ENCODE measurements at regions of chr7 and their contacts with region 1.

Region 1: DNA sequence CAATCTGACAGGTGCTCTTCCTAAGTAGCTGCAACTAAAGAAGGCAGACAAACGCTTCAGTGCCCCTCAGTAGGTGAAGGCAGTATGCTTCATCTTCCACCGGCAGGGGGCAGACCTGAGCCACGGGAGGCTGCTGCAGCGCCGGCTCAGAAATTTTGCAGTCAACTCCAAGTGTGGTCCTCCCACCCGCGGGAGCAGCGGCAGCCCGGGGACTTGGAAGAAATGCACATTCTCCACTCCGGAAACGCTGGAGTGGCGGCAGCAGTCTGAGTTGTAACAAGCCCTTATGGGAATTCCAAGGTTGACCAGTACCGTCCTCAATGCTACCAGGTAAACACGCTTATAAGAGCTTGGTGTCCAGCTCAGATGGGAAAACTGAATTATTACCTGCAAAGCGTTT is 3.4 kb downstream of the IGFBP3 start:
- DNase-seq: peak; percentile 81
- H3K4me3 ChIP-seq: no peak overlapping the region
- H3K27ac ChIP-seq: no peak overlapping the region
- H3K4me1 ChIP-seq: no peaks in the 10 kb centered on the region
- H3K27me3 ChIP-seq: peaks cover 36% of the 10 kb centered on the region
- CTCF ChIP-seq: peak; percentile 88

Region 2: DNA sequence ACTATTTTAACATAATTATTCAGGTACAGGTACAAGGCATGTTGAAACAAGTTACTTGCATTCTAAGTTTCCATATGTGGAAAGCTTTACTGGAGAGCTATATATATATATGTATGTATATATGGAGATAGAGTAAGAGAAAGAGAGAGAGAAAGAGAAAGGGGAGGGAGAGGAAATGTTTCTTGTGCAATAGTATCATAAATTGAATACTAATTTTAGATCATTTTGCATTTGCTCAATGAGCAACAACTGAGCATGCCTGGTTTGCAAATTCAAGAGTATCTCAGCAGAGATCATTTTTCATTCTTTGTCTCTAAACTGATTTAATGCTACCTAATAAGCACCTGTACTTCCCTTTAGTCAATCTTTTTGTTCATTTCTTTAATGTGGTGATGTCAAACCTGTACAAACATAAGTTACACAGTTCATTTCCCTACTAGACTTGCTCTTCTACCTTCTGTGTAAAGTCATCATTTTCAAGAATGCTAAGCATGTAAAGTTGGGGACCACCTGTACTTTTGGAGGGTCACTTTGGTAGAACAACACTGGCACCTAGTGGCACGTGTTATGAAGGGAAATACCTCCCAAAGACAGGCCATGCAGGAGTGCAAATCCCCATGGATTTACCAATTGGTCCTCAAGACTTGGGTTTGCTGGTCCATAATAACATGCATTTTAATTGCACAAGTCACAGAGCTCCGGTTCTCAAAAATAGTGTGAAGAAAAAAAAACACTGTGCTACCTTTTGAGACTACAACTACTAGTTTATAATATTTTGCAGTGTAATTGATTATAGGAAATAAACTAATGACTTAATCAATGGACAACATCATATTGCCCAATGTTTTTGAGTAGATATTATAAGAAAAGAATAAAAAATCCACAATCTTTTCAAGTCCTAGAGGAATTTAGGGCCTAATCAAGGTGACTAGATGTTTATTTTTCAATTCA is 434.6 kb after region 1 on chr7:
- intact Hi-C with region 1: loop called (anchors 5 kb)
- DNase-seq: no peak
- H3K4me3 ChIP-seq: no peak overlapping the region
- H3K27ac ChIP-seq: no peak overlapping the region
- H3K4me1 ChIP-seq: no peaks in the 10 kb centered on the region
- H3K27me3 ChIP-seq: no peaks in the 10 kb centered on the region
- CTCF ChIP-seq: peak; percentile 24

Region 3: DNA sequence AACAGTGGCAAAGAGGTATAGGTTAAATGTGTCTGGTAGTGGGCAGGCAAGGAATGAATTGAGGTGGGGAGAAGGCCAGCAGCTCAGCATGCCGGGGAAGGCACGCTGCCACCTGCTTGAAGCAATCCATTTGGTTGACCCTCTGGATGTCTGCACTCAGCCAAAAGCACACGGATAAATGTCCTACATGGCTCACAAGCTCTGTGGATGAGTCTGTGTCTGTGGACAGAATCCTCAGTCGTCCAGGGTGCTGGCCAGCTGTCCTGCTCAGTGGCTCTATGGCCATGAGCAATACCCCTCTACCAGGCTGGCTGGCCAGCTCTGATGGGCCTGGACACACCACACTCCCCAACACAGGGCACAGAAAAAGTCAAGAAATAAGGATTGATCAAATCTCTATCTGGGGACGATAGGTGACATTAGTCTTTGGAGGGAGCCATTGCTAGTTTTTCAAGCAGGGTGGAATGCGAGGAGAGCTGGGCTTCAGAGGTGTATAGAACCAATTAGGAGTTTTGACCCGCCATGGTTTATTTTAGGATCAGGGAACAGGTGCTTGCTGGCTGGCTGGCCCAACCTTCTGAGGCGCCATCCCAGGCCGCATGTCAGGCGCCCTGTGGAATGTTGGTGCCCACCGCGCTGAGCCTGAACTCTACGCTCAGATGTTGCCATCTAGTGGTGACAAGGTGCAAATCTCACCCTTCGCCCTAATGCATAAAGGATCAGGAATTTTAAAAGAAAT is 1170.8 kb after region 1 on chr7:
- intact Hi-C with region 1: loop called (anchors 2 kb)
- DNase-seq: peak; percentile 37
- H3K4me3 ChIP-seq: no peak overlapping the region
- H3K27ac ChIP-seq: no peak overlapping the region
- H3K4me1 ChIP-seq: no peaks in the 10 kb centered on the region
- H3K27me3 ChIP-seq: no peaks in the 10 kb centered on the region
- CTCF ChIP-seq: peak; percentile 84

Region 4: GRCh38 chr7:47179812-47180515 is 1262.3 kb after region 1 on chr7:
- intact Hi-C with region 1: loop called (anchors 2 kb)
- DNase-seq: peak; percentile 63
- H3K4me3 ChIP-seq: no peak overlapping the region
- H3K27ac ChIP-seq: no peak overlapping the region
- H3K4me1 ChIP-seq: no peaks in the 10 kb centered on the region
- H3K27me3 ChIP-seq: no peaks in the 10 kb centered on the region
- CTCF ChIP-seq: peak; percentile 80

Region 5: GRCh38 chr7:47254081-47255006 is 1336.7 kb after region 1 on chr7:
- intact Hi-C with region 1: loop called (anchors 5 kb)
- DNase-seq: peak; percentile 73
- H3K4me3 ChIP-seq: peak overlapping the region; percentile 39
- H3K27ac ChIP-seq: peak overlapping the region; percentile 11
- H3K4me1 ChIP-seq: no peaks in the 10 kb centered on the region
- H3K27me3 ChIP-seq: no peaks in the 10 kb centered on the region
- CTCF ChIP-seq: peak; percentile 96